BJ (cell line): ENCODE measurements at regions of chr16 and their contacts with region 1.

Region 1: GRCh38 chr16:30692381-30693064 is 6.4 kb upstream of the SRCAP start:
- DNase-seq: no peak
- H3K4me3 ChIP-seq: no peak overlapping the region
- H3K27me3 ChIP-seq: no peaks in the 10 kb centered on the region; the same call in 1 of the 2 replicates
- CTCF ChIP-seq: no peak

Region 2: DNA sequence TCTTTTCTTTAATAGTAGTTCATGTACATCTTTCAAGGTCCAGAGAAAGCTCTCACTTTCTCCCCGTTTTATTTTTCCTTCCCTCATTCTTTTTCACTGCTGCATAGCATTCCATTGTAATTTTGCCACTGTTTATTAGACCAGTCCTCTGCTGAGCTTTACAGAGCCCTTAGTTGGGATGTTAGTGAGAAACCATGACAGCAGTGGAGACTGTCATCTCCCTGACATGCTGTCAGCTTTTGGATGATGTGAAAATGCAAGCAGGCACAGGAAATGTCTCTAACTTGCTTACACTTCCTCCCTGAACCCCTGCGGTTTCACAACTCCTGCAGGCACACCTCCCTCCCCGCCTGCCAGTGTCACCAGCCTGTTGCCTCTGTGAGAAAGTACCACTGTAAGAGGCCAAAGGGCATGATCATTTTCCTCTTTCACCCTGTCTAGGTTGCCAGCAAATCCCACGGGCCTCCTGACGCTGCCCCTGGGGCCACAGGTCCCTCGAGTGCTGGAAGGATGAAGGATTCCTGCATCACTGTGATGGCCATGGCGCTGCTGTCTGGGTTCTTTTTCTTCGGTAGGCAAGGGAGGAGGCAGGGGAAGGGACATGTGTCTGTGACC is 220.1 kb before region 1 on chr16 and contains the start of gene ITGAL:
- CTCF ChIA-PET with region 1: no interaction called
- POLR2A ChIA-PET with region 1: no interaction called
- DNase-seq: no peak
- H3K4me3 ChIP-seq: no peak within 1 kb of the TSS
- H3K27me3 ChIP-seq: peaks cover 9% of the 10 kb centered on the region
- CTCF ChIP-seq: no peak
- polyA plus RNA-seq, gene ITGAL: 0.06 TPM in 2 replicates

Region 3: DNA sequence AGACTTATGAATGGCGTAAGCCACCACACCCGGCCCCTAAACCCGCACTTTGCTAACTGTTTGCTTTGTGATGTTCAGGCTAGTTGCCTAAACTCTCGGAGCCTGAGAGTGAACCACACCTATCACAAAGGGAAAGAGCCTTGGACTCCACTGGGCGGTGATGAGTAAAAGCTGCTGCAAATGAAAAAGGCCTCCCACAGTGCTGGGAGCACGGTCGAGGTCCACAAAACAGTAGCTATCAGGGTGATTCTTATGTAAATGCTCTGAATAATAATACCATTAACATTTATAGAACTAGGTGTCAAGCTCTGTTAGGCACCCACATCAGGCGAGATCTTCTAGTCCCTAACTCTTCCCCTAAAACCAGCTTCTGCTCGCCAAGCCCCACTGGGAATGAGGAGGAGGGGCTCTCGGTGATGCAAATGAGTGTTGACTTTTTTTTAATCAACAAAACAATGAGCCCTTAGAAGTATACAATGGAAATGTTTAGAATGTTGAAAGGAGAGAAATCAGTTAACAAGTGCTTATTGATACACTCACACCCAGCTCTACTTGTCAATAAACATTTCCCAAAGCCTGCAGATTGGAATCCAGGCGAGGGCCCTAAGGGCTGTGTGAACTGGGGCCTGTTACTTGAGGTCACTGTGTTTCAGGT is 14.5 kb before region 1 on chr16:
- CTCF ChIA-PET with region 1: interaction called, 23 read pairs
- POLR2A ChIA-PET with region 1: no interaction called
- DNase-seq: no peak
- H3K4me3 ChIP-seq: no peak overlapping the region
- H3K27me3 ChIP-seq: no peaks in the 10 kb centered on the region
- CTCF ChIP-seq: no peak